Heart right ventricle (tissue), 16 donors: ENCODE measurements at regions of chrX and their contacts with region 1.

Region 1: DNA sequence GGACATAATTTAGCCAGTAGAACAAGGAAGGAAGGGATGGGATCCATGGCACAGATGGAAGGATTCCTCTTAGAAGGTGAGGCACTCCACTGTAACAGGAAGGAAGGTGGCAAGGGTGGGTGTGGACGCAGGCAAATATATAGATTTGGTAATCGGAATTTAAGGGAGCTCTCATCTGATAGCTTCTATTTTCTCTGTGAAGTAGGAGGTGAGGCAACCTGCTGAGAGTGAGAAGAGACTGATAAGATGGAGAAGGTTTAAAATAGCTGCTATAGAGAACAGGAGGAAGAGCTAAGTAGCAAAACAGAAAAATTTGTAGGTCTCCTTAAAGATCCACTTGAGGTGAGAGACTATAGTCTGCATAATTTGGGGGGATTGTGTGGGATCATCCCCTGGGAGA is 61.8 kb upstream of the BRS3 start:
- DNase-seq: no peak
- ATAC-seq: no peak
- H3K4me3 ChIP-seq: no peak overlapping the region
- H3K27ac ChIP-seq: no peak overlapping the region
- H3K4me1 ChIP-seq: no peaks in the 10 kb centered on the region
- H3K27me3 ChIP-seq: peaks cover 0 to 23% (median 0%) of the 10 kb centered on the region in 7 donors
- CTCF ChIP-seq: no peak

Region 2: GRCh38 chrX:136176399-136176825 is 249.6 kb before region 1 on chrX:
- intact Hi-C with region 1: no loop called
- DNase-seq: no peak
- ATAC-seq: peak; percentile 67 to 96 (median 80)
- H3K4me3 ChIP-seq: no peak overlapping the region
- H3K27ac ChIP-seq: peak overlapping the region; percentile 33 to 86 (median 74)
- H3K4me1 ChIP-seq: peaks cover 0 to 83% (median 20%) of the 10 kb centered on the region in 9 donors
- H3K27me3 ChIP-seq: peaks cover 0 to 11% (median 0%) of the 10 kb centered on the region in 7 donors
- CTCF ChIP-seq: no peak

Region 3: DNA sequence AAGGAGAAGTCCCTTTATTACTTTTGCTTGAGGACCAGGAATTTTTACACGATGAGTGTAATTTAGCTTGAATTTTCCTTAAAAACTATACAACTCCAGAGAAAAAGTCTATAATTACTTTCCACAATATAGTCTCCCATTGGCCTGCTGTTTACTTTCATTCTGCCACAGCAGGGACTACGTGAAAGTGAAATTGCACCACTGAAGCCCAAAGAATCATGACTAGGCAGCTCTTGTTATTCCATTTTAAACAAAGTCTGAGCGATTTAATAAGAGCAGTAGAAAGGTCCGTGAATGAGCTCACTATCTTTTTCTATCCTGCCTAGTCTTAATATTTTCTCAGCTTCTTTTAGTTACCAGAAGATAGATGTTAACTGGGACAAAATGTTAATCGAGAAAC is 56.6 kb before region 1 on chrX:
- intact Hi-C with region 1: no loop called
- DNase-seq: no peak
- ATAC-seq: no peak
- H3K4me3 ChIP-seq: no peak overlapping the region
- H3K27ac ChIP-seq: no peak overlapping the region
- H3K4me1 ChIP-seq: no peaks in the 10 kb centered on the region
- H3K27me3 ChIP-seq: peaks cover 0 to 44% (median 0%) of the 10 kb centered on the region in 7 donors
- CTCF ChIP-seq: no peak

Region 4: GRCh38 chrX:137771537-137771936 is 1345.5 kb after region 1 on chrX:
- intact Hi-C with region 1: loop called in 1 of 10 experiments (anchors 5 kb)
- DNase-seq: no peak
- ATAC-seq: no peak
- H3K4me3 ChIP-seq: no peak overlapping the region
- H3K27ac ChIP-seq: no peak overlapping the region
- H3K4me1 ChIP-seq: no peaks in the 10 kb centered on the region
- H3K27me3 ChIP-seq: no peaks in the 10 kb centered on the region
- CTCF ChIP-seq: no peak